Activated T-helper 2 cell treated with anti-CD3 and anti-CD28 coated beads, Interferon-gamma antibody, Interleukin-2, Interleukin-4, amounts not matched to agents 10 μg/mL and 5 μg/mL and 100 μg/mL, durations not matched to agents 14 hours and 24 hours and 36 hours (primary cell): ENCODE measurements at regions of chr16 and their contacts with region 1.

Region 1: GRCh38 chr16:72664509-72665225 is 383.3 kb downstream of the ZFHX3 start:
- DNase-seq: peak; percentile 91
- H3K4me3 Mint-ChIP-seq: peak overlapping the region; percentile 99
- H3K27ac Mint-ChIP-seq: peak overlapping the region; percentile 93
- H3K4me1 Mint-ChIP-seq: peaks cover 26% of the 10 kb centered on the region
- H3K27me3 Mint-ChIP-seq: peaks cover 7% of the 10 kb centered on the region

Region 2: GRCh38 chr16:72008424-72009216 is 656.0 kb before region 1 on chr16 and contains the start of gene DHODH:
- intact Hi-C with region 1: loop called (anchors 5 kb)
- DNase-seq: peak; percentile 98
- H3K4me3 Mint-ChIP-seq: peak within 1 kb of the TSS; percentile 95
- H3K27ac Mint-ChIP-seq: peak within 1 kb of the TSS; percentile 90
- H3K4me1 Mint-ChIP-seq: peaks cover 17% of the 10 kb centered on the region
- H3K27me3 Mint-ChIP-seq: no peaks in the 10 kb centered on the region
- total RNA-seq, gene DHODH: 26.7 and 27.1 TPM in 2 replicates

Region 3: DNA sequence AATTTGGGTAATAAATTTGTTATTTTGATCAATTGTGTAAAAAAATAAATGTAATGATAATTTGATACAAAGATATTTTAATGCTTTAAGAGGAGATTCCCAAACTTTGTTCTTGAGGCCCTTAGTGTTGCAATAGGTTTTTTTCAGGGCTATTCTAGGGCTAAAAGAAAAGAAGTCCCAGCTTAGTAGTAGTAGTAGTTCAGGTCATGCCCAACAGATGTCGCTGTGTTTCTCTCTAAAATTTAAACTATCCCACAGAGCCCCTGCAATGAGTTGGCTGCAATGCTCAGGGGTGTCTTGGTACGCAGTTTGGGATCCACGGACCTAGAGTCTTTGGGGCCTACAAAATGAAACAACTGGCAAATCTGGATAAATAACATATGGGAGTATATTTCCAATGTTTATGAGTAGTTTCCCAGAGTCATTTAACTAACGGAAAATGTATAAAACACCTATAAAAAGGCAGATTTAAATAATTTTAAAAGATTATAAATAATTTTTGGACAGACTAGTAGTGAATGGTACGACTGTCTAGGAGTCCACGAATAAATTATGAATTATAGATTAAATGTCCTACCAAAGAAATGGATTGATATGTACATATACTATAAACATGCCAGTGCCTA is 264.3 kb before region 1 on chr16:
- intact Hi-C with region 1: loop called (anchors 2 kb)
- DNase-seq: no peak
- H3K4me3 Mint-ChIP-seq: no peak overlapping the region
- H3K27ac Mint-ChIP-seq: no peak overlapping the region
- H3K4me1 Mint-ChIP-seq: no peaks in the 10 kb centered on the region
- H3K27me3 Mint-ChIP-seq: no peaks in the 10 kb centered on the region

Region 4: GRCh38 chr16:72474501-72475123 is 190.1 kb before region 1 on chr16:
- intact Hi-C with region 1: loop called (anchors 2 kb)
- DNase-seq: no peak
- H3K4me3 Mint-ChIP-seq: no peak overlapping the region
- H3K27ac Mint-ChIP-seq: peak overlapping the region; percentile 40
- H3K4me1 Mint-ChIP-seq: peaks cover 13% of the 10 kb centered on the region
- H3K27me3 Mint-ChIP-seq: no peaks in the 10 kb centered on the region

Region 5: GRCh38 chr16:72637306-72637705 is 27.4 kb before region 1 on chr16:
- intact Hi-C with region 1: no loop called
- DNase-seq: no peak
- H3K4me3 Mint-ChIP-seq: no peak overlapping the region
- H3K27ac Mint-ChIP-seq: no peak overlapping the region
- H3K4me1 Mint-ChIP-seq: peaks cover 1% of the 10 kb centered on the region
- H3K27me3 Mint-ChIP-seq: no peaks in the 10 kb centered on the region

Region 6: GRCh38 chr16:72677662-72678447 is 13.2 kb after region 1 on chr16:
- intact Hi-C with region 1: no loop called
- DNase-seq: no peak
- H3K4me3 Mint-ChIP-seq: no peak overlapping the region
- H3K27ac Mint-ChIP-seq: no peak overlapping the region
- H3K4me1 Mint-ChIP-seq: no peaks in the 10 kb centered on the region
- H3K27me3 Mint-ChIP-seq: no peaks in the 10 kb centered on the region

Region 7: GRCh38 chr16:72689851-72690250 is 25.2 kb after region 1 on chr16:
- intact Hi-C with region 1: no loop called
- DNase-seq: no peak
- H3K4me3 Mint-ChIP-seq: no peak overlapping the region
- H3K27ac Mint-ChIP-seq: no peak overlapping the region
- H3K4me1 Mint-ChIP-seq: no peaks in the 10 kb centered on the region
- H3K27me3 Mint-ChIP-seq: no peaks in the 10 kb centered on the region

Region 8: GRCh38 chr16:72787514-72788268 is 123.0 kb after region 1 on chr16:
- intact Hi-C with region 1: loop called (anchors 1 kb)
- DNase-seq: peak; percentile 63
- H3K4me3 Mint-ChIP-seq: peak overlapping the region; percentile 77
- H3K27ac Mint-ChIP-seq: peak overlapping the region; percentile 30
- H3K4me1 Mint-ChIP-seq: peaks cover 26% of the 10 kb centered on the region
- H3K27me3 Mint-ChIP-seq: peaks cover 22% of the 10 kb centered on the region

Region 9: GRCh38 chr16:73058221-73058615 is 393.6 kb after region 1 on chr16:
- intact Hi-C with region 1: loop called (anchors 10 kb)
- DNase-seq: peak; percentile 26
- H3K4me3 Mint-ChIP-seq: peak overlapping the region; percentile 35
- H3K27ac Mint-ChIP-seq: no peak overlapping the region
- H3K4me1 Mint-ChIP-seq: peaks cover 15% of the 10 kb centered on the region
- H3K27me3 Mint-ChIP-seq: peaks cover 76% of the 10 kb centered on the region

Region 10: DNA sequence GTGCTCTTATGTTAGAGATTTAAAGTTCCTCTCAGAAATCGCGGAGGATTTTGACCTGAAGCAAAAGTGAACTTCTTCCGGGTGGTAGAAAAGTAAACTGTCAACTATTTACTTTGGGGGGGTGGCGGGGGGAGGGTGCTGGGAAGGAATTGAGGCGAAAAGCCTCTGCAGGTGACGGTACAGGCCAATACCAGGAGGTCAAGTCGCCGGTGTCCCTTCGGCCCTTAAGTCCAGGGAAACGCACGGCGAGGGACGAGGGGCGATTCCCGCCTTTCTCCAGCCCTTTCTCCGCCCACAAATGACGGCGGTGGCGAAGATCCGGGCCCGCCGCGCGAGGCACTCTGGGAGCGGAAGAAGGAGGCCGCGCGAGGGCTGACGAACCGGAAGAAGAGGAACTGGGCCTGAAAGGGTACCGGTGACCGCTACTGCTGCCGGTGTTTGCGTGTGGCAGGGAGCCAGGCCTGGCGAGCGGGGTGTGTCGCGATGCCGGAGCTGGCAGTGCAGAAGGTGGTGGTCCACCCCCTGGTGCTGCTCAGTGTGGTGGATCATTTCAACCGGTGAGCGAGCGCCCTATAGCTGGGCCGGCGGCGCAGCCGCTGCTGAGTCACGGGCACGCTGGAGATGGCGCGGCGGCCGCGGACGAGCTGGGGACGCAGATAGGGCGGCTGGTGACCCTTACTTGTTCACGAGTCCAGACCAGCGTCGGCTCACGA is 1631.9 kb after region 1 on chr16 and contains the start of gene PSMD7:
- intact Hi-C with region 1: loop called (anchors 10 kb)
- DNase-seq: peak; percentile 87
- H3K4me3 Mint-ChIP-seq: peak within 1 kb of the TSS; percentile 84
- H3K27ac Mint-ChIP-seq: peak within 1 kb of the TSS; percentile 90
- H3K4me1 Mint-ChIP-seq: peaks cover 20% of the 10 kb centered on the region
- H3K27me3 Mint-ChIP-seq: no peaks in the 10 kb centered on the region
- total RNA-seq, gene PSMD7: 164 and 170 TPM in 2 replicates